ENCODE measurements at regions of chr20 and their contacts with region 1.

Region 1: GRCh38 chr20:39049684-39050554 is 87.8 kb downstream of the DHX35 start:
- DNase-seq: peak; percentile 64
- H3K4me3 Mint-ChIP-seq: peak overlapping the region; percentile 78
- H3K27ac Mint-ChIP-seq: no peak overlapping the region
- H3K4me1 Mint-ChIP-seq: peaks cover 5% of the 10 kb centered on the region
- H3K27me3 Mint-ChIP-seq: peaks cover 15% of the 10 kb centered on the region
- CTCF ChIP-seq: peak; percentile 96

Region 2: DNA sequence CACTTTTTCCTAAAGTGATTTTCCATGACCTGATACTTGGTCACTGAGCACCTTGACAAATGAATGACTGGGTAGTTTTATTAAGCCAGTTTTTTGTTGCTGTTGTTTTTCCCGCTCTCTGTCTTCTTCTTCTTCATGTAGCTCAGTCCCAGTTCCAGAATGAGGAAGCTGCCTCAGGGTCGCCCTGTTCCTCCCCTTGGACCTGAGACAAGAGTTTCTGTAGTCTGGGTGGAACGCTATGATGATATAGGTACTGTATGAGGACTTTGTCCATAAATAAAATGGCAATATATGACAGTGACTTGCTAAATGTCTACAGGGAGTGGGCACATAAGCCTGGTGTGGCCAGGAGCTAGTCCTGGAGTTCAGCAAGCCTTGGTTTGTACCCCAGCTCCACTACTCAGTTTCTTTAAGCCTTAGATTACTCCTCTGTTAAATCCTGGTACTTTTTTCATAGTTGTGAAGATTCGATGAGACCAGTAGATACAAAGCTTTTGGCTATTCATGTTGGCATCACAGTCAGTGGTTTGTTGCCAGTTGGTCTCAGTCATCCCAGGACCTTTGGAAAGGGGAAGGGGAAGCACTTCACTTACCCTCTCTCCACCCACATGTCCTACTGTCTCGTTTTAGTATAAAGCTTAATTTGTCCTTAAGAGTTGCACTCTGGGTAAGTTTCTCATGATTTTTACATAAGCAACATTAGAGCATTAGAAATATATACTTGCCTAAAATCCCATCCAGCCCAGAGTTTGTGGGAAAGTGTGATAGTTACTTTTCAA is 480.0 kb before region 1 on chr20:
- CTCF ChIA-PET with region 1: interaction called, 11 read pairs
- POLR2A ChIA-PET with region 1: no interaction called
- intact Hi-C with region 1: no loop called
- DNase-seq: no peak
- H3K4me3 Mint-ChIP-seq: no peak overlapping the region
- H3K27ac Mint-ChIP-seq: no peak overlapping the region
- H3K4me1 Mint-ChIP-seq: no peaks in the 10 kb centered on the region
- H3K27me3 Mint-ChIP-seq: no peaks in the 10 kb centered on the region
- CTCF ChIP-seq: no peak

Region 3: GRCh38 chr20:38764567-38765355 is 285.2 kb before region 1 on chr20:
- CTCF ChIA-PET with region 1: interaction called, 12 read pairs
- POLR2A ChIA-PET with region 1: no interaction called
- intact Hi-C with region 1: loop called (anchors 10 kb)
- DNase-seq: peak; percentile 87
- H3K4me3 Mint-ChIP-seq: no peak overlapping the region
- H3K27ac Mint-ChIP-seq: no peak overlapping the region
- H3K4me1 Mint-ChIP-seq: peaks cover 16% of the 10 kb centered on the region
- H3K27me3 Mint-ChIP-seq: no peaks in the 10 kb centered on the region
- CTCF ChIP-seq: no peak

Region 4: DNA sequence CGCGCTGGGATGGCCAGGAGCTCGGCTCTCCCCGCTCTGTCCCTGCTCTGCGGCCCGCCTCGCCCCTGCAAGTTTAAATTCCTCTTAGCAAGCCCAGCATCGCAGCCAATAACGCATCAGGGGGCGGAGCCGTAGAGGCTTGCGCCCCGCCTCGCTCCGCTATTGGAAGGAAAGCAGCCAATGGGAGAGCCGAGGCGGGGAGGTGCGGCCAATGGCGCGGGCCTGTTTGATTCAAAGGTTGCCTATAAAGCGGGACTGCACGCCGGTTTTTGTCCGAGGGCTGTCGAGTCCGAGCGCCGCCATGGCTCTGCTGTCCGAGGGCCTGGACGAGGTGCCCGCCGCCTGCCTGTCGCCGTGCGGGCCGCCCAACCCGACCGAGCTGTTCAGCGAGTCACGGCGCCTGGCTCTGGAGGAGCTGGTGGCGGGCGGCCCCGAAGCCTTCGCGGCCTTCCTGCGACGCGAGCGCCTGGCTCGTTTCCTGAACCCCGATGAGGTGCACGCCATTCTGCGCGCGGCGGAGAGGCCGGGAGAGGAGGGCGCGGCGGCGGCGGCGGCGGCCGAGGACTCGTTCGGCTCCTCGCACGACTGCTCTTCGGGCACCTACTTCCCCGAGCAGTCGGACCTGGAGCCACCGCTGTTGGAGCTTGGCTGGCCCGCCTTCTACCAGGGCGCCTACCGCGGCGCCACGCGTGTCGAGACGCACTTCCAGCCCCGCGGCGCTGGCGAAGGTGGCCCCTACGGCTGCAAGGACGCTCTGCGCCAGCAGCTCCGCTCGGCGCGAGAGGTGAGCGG is 123.6 kb before region 1 on chr20 and contains the start of gene FAM83D:
- CTCF ChIA-PET with region 1: interaction called, 132 read pairs
- POLR2A ChIA-PET with region 1: interaction called, 3 read pairs
- intact Hi-C with region 1: loop called (anchors 1 kb)
- DNase-seq: peak; percentile 98
- H3K4me3 Mint-ChIP-seq: peak within 1 kb of the TSS; percentile 77
- H3K27ac Mint-ChIP-seq: no peak within 1 kb of the TSS
- H3K4me1 Mint-ChIP-seq: peaks cover 19% of the 10 kb centered on the region
- H3K27me3 Mint-ChIP-seq: no peaks in the 10 kb centered on the region
- CTCF ChIP-seq: peak; percentile 56
- total RNA-seq, gene FAM83D: 10.7 and 18.4 TPM in 2 replicates

Region 5: GRCh38 chr20:38985603-38986170 is 64.2 kb before region 1 on chr20:
- CTCF ChIA-PET with region 1: interaction called, 16 read pairs
- POLR2A ChIA-PET with region 1: no interaction called
- intact Hi-C with region 1: no loop called
- DNase-seq: peak; percentile 6
- H3K4me3 Mint-ChIP-seq: no peak overlapping the region
- H3K27ac Mint-ChIP-seq: peak overlapping the region; percentile 59
- H3K4me1 Mint-ChIP-seq: peaks cover 15% of the 10 kb centered on the region
- H3K27me3 Mint-ChIP-seq: no peaks in the 10 kb centered on the region
- CTCF ChIP-seq: no peak

Region 6: GRCh38 chr20:39029324-39029820 is 20.5 kb before region 1 on chr20:
- CTCF ChIA-PET with region 1: interaction called, 26 read pairs
- POLR2A ChIA-PET with region 1: no interaction called
- intact Hi-C with region 1: no loop called
- DNase-seq: peak; percentile 53
- H3K4me3 Mint-ChIP-seq: no peak overlapping the region
- H3K27ac Mint-ChIP-seq: peak overlapping the region; percentile 43
- H3K4me1 Mint-ChIP-seq: peaks cover 11% of the 10 kb centered on the region
- H3K27me3 Mint-ChIP-seq: no peaks in the 10 kb centered on the region
- CTCF ChIP-seq: no peak

Region 7: GRCh38 chr20:39097889-39098288 is 48.0 kb after region 1 on chr20:
- CTCF ChIA-PET with region 1: interaction called, 10 read pairs
- POLR2A ChIA-PET with region 1: no interaction called
- intact Hi-C with region 1: no loop called
- DNase-seq: no peak
- H3K4me3 Mint-ChIP-seq: no peak overlapping the region
- H3K27ac Mint-ChIP-seq: no peak overlapping the region
- H3K4me1 Mint-ChIP-seq: no peaks in the 10 kb centered on the region
- H3K27me3 Mint-ChIP-seq: peaks cover 2% of the 10 kb centered on the region
- CTCF ChIP-seq: no peak

Measured in MCF 10A (cell line).